Caco-2 (cell line): ENCODE measurements at regions of chr20 and their contacts with region 1.

Region 1: DNA sequence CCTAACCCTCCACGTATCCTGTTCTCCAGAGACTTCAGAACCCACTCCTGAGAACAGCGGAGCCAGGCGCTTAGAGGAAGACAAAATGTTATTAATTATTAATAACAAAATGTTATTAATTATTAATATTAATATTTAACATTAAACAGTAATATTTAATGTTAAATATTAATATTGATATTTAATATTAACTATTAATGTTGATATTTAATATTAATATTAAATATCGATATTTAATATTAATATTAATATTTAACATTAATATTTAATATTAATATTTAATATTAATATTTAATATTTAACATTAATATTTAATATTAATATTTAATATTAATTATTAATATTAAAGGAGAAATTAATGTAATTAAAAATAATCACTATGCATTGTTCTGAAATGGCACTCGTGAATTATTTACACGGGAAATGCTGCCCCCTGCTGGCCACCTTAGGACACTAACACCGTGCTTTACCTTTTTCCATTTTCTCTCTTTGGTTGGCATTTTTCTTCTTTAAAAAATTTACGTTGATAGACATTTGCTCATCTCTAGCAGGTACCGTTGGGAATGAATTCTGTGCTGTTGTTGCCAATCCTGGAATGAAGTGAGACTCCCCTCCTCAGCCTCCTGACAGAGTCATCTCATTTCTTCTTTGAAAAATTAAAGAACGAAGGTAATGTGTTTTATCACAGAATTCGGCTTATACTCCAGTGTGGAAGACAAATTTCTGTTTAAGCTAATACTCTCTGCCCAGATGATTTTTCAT is 7.5 kb upstream of the GGTLC1 start:
- DNase-seq: peak; percentile 53 to 68
- H3K4me3 ChIP-seq: no peak overlapping the region
- H3K4me3 Mint-ChIP-seq: no peak overlapping the region
- H3K27ac Mint-ChIP-seq: no peak overlapping the region
- H3K4me1 ChIP-seq: no peaks in the 10 kb centered on the region
- H3K4me1 Mint-ChIP-seq: no peaks in the 10 kb centered on the region
- H3K27me3 ChIP-seq: no peaks in the 10 kb centered on the region
- H3K27me3 Mint-ChIP-seq: peaks cover 13% of the 10 kb centered on the region
- CTCF ChIP-seq: peak; percentile 67 to 87

Region 2: DNA sequence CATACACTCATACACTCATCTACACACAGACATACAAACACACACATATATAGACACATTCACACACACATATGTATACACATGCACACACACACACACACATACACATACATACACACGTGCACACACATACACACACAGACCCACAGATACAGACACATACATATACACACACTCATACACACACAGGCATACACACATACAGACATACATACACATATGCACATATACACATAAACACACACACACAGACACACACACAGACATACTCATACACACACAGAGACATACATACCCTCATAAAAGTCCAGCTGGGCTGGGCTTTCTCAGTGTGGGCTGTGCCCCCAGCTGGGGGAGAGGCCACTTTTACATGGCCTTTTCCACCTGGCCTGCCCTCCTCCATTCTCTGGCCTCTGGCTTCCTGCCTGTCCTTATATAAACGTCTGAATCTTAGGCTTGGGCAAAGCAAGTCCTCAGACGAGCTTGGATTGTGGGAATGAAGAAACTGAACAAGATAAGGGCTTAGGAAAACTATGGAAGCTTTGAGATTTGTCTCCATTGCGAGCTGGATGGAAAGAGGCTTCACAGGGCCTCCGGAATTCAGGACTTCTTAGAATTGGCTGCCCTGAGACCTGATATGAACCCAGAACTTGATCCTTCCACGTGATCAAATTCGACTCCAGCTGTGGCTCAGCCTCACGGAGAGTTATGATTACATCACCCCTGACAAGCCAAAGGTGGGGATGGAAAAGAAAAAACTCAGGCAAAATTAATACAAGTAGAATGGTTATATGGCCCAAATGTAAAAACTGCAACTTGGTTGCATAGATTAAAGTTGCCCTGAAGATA is 335.9 kb before region 1 on chr20:
- CTCF ChIA-PET with region 1: no interaction called
- POLR2A ChIA-PET with region 1: no interaction called
- intact Hi-C with region 1: loop called (anchors 5 kb)
- DNase-seq: no peak
- H3K4me3 ChIP-seq: no peak overlapping the region
- H3K4me3 Mint-ChIP-seq: peak overlapping the region; percentile 48
- H3K27ac Mint-ChIP-seq: peak overlapping the region; percentile 80
- H3K4me1 ChIP-seq: peaks cover 79% of the 10 kb centered on the region
- H3K4me1 Mint-ChIP-seq: peaks cover 68% of the 10 kb centered on the region
- H3K27me3 ChIP-seq: no peaks in the 10 kb centered on the region
- H3K27me3 Mint-ChIP-seq: no peaks in the 10 kb centered on the region
- CTCF ChIP-seq: no peak

Region 3: DNA sequence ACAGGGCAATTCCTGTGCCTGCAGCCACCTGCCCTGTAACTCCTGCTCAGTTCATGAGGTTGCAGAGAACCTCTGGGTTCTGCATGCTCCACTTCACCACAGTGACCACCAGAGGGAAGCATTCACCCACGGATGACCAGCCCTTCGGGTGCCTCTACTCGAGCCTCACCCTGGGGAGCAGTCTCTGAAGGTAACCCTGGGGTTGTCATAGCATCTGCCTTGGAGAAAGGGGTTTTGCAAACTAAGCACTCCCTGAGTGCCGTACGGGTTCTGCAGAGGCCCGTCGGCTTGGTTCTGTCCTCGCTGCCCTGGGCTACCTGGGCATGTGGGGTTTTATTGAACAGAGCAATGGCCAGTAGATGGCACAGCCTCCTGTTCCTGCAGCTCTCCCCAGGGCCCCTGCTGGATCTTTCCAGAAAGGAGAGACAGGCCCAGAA is 106.3 kb before region 1 on chr20:
- CTCF ChIA-PET with region 1: interaction called, 4 read pairs
- POLR2A ChIA-PET with region 1: no interaction called
- intact Hi-C with region 1: loop called (anchors 1 kb)
- DNase-seq: peak; percentile 78 to 80
- H3K4me3 ChIP-seq: no peak overlapping the region
- H3K4me3 Mint-ChIP-seq: no peak overlapping the region
- H3K27ac Mint-ChIP-seq: no peak overlapping the region
- H3K4me1 ChIP-seq: peaks cover under 1% of the 10 kb centered on the region; the same call in 1 of the 2 replicates
- H3K4me1 Mint-ChIP-seq: no peaks in the 10 kb centered on the region
- H3K27me3 ChIP-seq: no peaks in the 10 kb centered on the region
- H3K27me3 Mint-ChIP-seq: peaks cover 8% of the 10 kb centered on the region
- CTCF ChIP-seq: peak; percentile 79 to 86

Region 4: DNA sequence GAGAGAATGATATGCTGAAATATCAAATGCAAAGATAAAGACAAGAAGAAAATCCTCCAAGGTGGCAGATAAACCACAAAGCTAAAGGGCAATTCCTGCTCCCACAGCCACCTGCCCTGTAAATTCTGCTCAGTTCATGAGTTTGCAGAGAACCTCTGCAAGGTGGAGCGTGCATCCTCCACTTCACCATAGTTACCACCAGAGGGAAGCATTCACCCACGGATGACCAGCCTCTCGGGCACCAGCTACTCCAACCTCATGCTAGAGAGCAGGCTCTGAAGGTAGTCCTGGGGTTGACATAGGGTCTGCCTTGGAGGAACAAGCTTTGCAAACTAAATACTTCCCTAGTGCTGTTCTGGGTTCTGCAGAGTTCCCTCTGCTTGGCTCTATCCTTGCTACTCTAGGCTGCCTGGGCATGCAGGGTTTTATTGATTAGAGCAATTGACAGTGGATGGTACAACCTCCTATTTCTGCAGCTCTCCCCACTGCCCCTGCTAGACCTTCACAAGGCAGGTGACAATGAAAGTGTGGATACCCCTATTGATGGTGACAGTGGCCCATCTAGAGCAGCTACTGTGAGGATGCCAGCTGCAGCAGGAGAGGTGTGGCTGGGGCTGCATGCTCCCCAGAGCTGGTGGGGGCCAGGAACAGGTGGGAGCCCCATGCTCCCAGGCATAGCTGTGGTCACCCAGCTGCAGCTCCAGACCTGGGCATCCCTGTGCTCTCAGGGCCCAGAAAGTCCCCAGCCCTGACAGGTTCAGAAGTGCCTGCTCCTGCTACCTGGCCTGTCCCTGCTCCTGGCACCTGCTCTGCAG is 58.6 kb before region 1 on chr20:
- CTCF ChIA-PET with region 1: interaction called, 15 read pairs
- POLR2A ChIA-PET with region 1: no interaction called
- intact Hi-C with region 1: loop called (anchors 1 kb)
- DNase-seq: peak; percentile 76 to 79
- H3K4me3 ChIP-seq: no peak overlapping the region
- H3K4me3 Mint-ChIP-seq: no peak overlapping the region
- H3K27ac Mint-ChIP-seq: no peak overlapping the region
- H3K4me1 ChIP-seq: no peaks in the 10 kb centered on the region
- H3K4me1 Mint-ChIP-seq: no peaks in the 10 kb centered on the region
- H3K27me3 ChIP-seq: no peaks in the 10 kb centered on the region
- H3K27me3 Mint-ChIP-seq: peaks cover 6% of the 10 kb centered on the region
- CTCF ChIP-seq: peak; percentile 83 to 90

Region 5: GRCh38 chr20:23959054-23959453 is 37.0 kb before region 1 on chr20:
- CTCF ChIA-PET with region 1: no interaction called
- POLR2A ChIA-PET with region 1: no interaction called
- intact Hi-C with region 1: no loop called
- DNase-seq: no peak
- H3K4me3 ChIP-seq: no peak overlapping the region
- H3K4me3 Mint-ChIP-seq: no peak overlapping the region
- H3K27ac Mint-ChIP-seq: no peak overlapping the region
- H3K4me1 ChIP-seq: no peaks in the 10 kb centered on the region
- H3K4me1 Mint-ChIP-seq: no peaks in the 10 kb centered on the region
- H3K27me3 ChIP-seq: no peaks in the 10 kb centered on the region
- H3K27me3 Mint-ChIP-seq: no peaks in the 10 kb centered on the region
- CTCF ChIP-seq: no peak

Region 6: GRCh38 chr20:23974966-23975365 is 21.1 kb before region 1 on chr20:
- CTCF ChIA-PET with region 1: no interaction called
- POLR2A ChIA-PET with region 1: no interaction called
- intact Hi-C with region 1: loop called (anchors 2 kb)
- DNase-seq: no peak
- H3K4me3 ChIP-seq: no peak overlapping the region
- H3K4me3 Mint-ChIP-seq: no peak overlapping the region
- H3K27ac Mint-ChIP-seq: no peak overlapping the region
- H3K4me1 ChIP-seq: no peaks in the 10 kb centered on the region
- H3K4me1 Mint-ChIP-seq: peaks cover 1% of the 10 kb centered on the region
- H3K27me3 ChIP-seq: no peaks in the 10 kb centered on the region
- H3K27me3 Mint-ChIP-seq: peaks cover 5% of the 10 kb centered on the region
- CTCF ChIP-seq: no peak

Region 7: DNA sequence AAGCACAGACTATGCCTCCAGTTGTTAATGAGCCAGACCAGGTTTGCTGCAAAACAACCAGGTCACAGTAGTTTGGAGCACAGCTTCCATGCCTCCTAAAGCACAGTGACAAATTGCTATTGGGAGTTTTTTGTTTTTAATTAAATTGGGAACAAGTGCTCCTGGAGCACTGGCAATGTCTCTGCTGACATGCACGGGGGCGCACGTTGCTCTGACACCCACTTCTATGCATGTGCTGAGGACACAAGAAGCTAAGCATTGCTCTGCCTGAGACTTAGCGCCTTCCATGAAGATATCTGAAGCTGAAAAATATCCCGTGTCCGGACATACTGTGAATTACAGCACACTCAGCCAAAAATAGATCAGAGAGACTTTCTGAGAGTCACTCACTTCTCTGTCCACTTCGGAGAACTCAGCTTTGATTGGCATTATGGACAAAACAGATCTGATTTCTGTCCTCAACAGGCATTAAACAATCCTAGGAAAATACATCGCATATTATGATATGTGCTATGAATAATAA is 11.0 kb after region 1 on chr20:
- CTCF ChIA-PET with region 1: no interaction called
- POLR2A ChIA-PET with region 1: no interaction called
- intact Hi-C with region 1: no loop called
- DNase-seq: no peak
- H3K4me3 ChIP-seq: no peak overlapping the region
- H3K4me3 Mint-ChIP-seq: no peak overlapping the region
- H3K27ac Mint-ChIP-seq: no peak overlapping the region
- H3K4me1 ChIP-seq: no peaks in the 10 kb centered on the region
- H3K4me1 Mint-ChIP-seq: no peaks in the 10 kb centered on the region
- H3K27me3 ChIP-seq: no peaks in the 10 kb centered on the region; the same call in 1 of the 2 replicates
- H3K27me3 Mint-ChIP-seq: peaks cover 14% of the 10 kb centered on the region
- CTCF ChIP-seq: no peak

Region 8: DNA sequence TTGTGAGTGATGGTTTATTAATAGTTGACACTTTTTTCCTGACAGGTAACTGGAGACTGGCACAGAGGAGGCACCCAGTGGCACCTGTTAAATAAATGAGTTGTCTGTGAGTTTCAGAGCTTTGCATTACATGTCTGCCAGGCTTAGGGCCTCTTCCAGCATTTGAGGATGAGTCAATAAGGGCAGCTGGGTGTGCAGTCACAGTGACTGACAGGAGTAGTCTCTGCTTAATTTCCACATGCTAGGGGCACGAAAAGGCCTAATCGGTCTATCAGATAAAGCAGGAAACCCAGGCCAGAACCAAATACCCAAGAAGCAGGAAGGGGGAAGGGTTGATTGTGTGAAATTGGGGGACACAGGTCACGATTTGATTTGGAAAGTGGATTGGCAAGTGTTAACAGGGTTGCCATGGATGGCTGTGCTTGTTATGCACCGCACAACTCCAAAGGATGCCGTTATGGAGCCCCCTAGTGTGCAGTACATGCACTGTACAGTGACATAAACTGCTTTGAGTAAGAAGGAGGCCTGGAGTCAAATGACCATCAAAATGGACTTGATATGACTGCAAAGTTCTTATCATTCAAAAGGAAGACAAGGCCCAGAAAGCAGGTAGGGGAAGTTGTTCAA is 104.4 kb after region 1 on chr20:
- CTCF ChIA-PET with region 1: no interaction called
- POLR2A ChIA-PET with region 1: no interaction called
- intact Hi-C with region 1: loop called (anchors 2 kb)
- DNase-seq: peak; percentile 63 to 69
- H3K4me3 ChIP-seq: no peak overlapping the region
- H3K4me3 Mint-ChIP-seq: no peak overlapping the region
- H3K27ac Mint-ChIP-seq: no peak overlapping the region
- H3K4me1 ChIP-seq: peaks cover 18% of the 10 kb centered on the region
- H3K4me1 Mint-ChIP-seq: peaks cover 16% of the 10 kb centered on the region
- H3K27me3 ChIP-seq: no peaks in the 10 kb centered on the region
- H3K27me3 Mint-ChIP-seq: no peaks in the 10 kb centered on the region
- CTCF ChIP-seq: peak; percentile 77 to 82

Region 9: GRCh38 chr20:24118441-24119175 is 122.5 kb after region 1 on chr20:
- CTCF ChIA-PET with region 1: no interaction called
- POLR2A ChIA-PET with region 1: no interaction called
- intact Hi-C with region 1: no loop called
- DNase-seq: no peak
- H3K4me3 ChIP-seq: no peak overlapping the region
- H3K4me3 Mint-ChIP-seq: no peak overlapping the region
- H3K27ac Mint-ChIP-seq: no peak overlapping the region
- H3K4me1 ChIP-seq: no peaks in the 10 kb centered on the region
- H3K4me1 Mint-ChIP-seq: no peaks in the 10 kb centered on the region
- H3K27me3 ChIP-seq: no peaks in the 10 kb centered on the region
- H3K27me3 Mint-ChIP-seq: peaks cover 7% of the 10 kb centered on the region
- CTCF ChIP-seq: no peak

Region 10: GRCh38 chr20:24164360-24164759 is 168.3 kb after region 1 on chr20:
- CTCF ChIA-PET with region 1: no interaction called
- POLR2A ChIA-PET with region 1: no interaction called
- intact Hi-C with region 1: loop called (anchors 1 kb)
- DNase-seq: peak; percentile 54 to 67
- H3K4me3 ChIP-seq: no peak overlapping the region
- H3K4me3 Mint-ChIP-seq: no peak overlapping the region
- H3K27ac Mint-ChIP-seq: no peak overlapping the region
- H3K4me1 ChIP-seq: no peaks in the 10 kb centered on the region
- H3K4me1 Mint-ChIP-seq: no peaks in the 10 kb centered on the region
- H3K27me3 ChIP-seq: no peaks in the 10 kb centered on the region
- H3K27me3 Mint-ChIP-seq: peaks cover 3% of the 10 kb centered on the region
- CTCF ChIP-seq: peak; percentile 56 to 80